ENCODE measurements at regions of chr6 and their contacts with region 1.

Region 1: DNA sequence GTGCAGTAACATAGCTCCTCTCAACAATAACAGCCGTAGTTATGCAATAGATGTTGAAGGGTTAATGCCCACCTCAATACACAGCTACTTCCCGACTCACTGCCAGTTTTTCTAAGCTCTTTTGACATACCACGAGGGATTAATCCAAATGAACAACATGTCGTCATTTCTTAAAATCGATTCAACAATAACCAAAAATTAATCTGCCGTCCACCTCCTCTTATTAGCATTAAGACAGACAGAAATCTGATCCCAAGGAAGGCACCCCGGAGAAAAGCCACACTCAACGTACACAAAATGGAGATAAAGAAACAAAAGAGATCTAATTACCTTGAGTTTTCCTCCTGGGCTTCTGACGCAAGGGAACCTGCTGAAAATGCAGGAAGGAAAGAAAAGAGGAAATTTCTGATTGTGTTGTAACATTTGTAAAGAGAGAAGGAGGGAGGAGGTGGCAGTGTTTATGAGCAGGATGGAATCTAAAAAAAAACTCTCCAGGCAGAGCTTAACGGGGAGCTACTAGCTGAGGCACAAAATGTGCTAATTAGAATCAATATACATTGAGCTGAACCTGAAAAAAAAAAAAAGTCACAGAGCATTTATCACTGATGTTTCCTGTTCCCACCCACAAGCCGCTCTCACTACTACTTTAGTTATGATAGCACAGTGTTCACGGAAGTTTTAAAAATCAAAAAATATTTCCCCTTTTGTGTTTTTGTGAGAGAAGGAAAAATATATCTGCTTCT is 109.3 kb downstream of the IPCEF1 start:
- DNase-seq: peak in 6 of 9 donors; percentile 45 to 67 (median 56)
- ATAC-seq: peak; percentile 64
- H3K4me3 ChIP-seq: peak overlapping the region; percentile 62
- H3K4me3 Mint-ChIP-seq: peak overlapping the region; percentile 84 to 100 (median 96)
- H3K27ac ChIP-seq: peak overlapping the region; percentile 81
- H3K27ac Mint-ChIP-seq: peak overlapping the region; percentile 90 to 97 (median 96)
- H3K4me1 ChIP-seq: peaks cover 52 to 59% of the 10 kb centered on the region in 2 donors
- H3K4me1 Mint-ChIP-seq: peaks cover 59 to 81% (median 77%) of the 10 kb centered on the region in 7 donors
- H3K27me3 ChIP-seq: no peaks in the 10 kb centered on the region
- H3K27me3 Mint-ChIP-seq: peaks cover 0 to 14% (median 0%) of the 10 kb centered on the region in 5 donors

Region 2: GRCh38 chr6:152301764-152302568 is 1945.3 kb before region 1 on chr6:
- CTCF ChIA-PET with region 1: no interaction called
- POLR2A ChIA-PET with region 1: no interaction called
- intact Hi-C with region 1: loop called in 1 of 2 experiments (anchors 10 kb)
- DNase-seq: peak; percentile 76 to 91 (median 87)
- ATAC-seq: peak; percentile 98
- H3K4me3 ChIP-seq: peak overlapping the region; percentile 84
- H3K4me3 Mint-ChIP-seq: peak overlapping the region; percentile 87 to 100 (median 100)
- H3K27ac ChIP-seq: peak overlapping the region; percentile 85
- H3K27ac Mint-ChIP-seq: peak overlapping the region; percentile 92 to 100 (median 99)
- H3K4me1 ChIP-seq: peaks cover 12 to 14% of the 10 kb centered on the region in 2 donors
- H3K4me1 Mint-ChIP-seq: peaks cover 22 to 49% (median 40%) of the 10 kb centered on the region in 7 donors
- H3K27me3 ChIP-seq: no peaks in the 10 kb centered on the region
- H3K27me3 Mint-ChIP-seq: no peaks in the 10 kb centered on the region

Region 3: DNA sequence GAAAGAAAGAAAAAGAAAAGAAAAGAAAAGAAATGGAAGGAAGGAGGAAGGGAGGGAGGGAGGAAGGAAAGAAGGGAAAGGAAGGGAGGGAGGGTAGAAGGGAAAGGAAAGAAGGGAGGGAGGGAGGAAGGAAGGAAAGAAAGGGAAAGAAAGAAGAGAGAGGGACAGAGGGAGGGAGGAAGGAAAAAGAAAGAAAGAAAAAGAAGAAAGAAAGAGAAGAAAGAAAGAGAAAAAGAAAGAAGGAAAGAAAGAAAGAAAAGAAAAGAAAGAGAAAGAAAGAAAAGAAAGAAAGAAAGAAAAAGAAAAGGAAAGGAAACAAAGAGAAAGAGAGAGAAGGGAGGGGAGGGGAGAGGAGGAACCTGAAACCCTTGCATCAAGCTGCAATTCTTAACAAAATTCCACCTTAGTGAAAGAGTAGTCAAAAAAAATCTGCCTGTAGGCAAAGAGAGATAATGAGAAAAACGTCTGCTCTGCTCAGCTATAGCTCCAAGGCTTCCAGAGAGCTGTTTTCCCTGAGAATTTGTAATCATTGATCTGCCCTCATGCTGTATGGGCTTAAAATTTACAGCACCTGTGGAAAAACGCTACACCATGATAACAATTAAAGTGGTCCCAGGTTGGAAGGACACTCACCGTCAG is 1566.3 kb before region 1 on chr6:
- CTCF ChIA-PET with region 1: no interaction called
- POLR2A ChIA-PET with region 1: no interaction called
- intact Hi-C with region 1: no loop called
- DNase-seq: no peak
- ATAC-seq: no peak
- H3K4me3 ChIP-seq: no peak overlapping the region
- H3K4me3 Mint-ChIP-seq: no peak overlapping the region
- H3K27ac ChIP-seq: no peak overlapping the region
- H3K27ac Mint-ChIP-seq: no peak overlapping the region
- H3K4me1 ChIP-seq: no peaks in the 10 kb centered on the region
- H3K4me1 Mint-ChIP-seq: no peaks in the 10 kb centered on the region
- H3K27me3 ChIP-seq: no peaks in the 10 kb centered on the region
- H3K27me3 Mint-ChIP-seq: peaks cover 0 to 16% (median 11%) of the 10 kb centered on the region in 5 donors

Region 4: DNA sequence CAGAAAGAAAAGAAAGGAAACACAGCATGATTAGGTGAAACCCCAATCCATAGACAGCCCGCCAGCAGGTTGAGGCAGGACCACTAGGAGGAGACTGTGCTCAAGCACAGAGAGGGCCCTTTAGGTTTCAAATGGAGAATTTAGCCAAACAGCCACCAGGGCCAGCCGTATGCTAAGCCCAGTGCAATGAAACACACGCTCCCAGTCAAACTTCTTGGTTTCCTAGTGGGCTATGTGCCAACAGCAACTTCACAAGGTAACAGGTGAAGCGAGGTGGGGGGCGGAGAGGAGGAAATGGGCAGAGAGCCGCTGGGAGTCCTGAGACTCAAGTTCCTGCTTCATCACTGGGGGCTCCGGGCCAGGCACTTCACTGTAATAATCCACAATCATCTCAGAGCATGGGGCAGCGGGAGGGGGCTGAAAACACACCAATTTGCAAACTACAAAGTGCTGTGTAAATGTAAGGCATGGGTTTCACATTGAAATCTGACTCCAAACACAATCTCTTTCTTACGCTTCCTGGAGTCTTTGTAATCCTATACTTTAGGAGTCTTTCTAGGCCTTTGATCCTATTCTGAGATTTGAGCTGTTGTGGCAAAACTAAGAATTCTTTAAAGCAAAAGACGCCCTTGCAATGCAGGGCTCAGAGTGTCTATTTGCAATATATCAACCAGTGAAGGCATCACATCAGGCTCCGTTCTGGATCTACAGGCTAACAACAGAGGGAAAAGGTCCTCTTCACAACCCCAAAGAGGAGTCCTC is 91.0 kb before region 1 on chr6:
- CTCF ChIA-PET with region 1: interaction called, 4 read pairs
- POLR2A ChIA-PET with region 1: interaction called, 6 read pairs
- intact Hi-C with region 1: loop called (anchors 1 kb)
- DNase-seq: peak; percentile 29 to 70 (median 58)
- ATAC-seq: peak; percentile 92
- H3K4me3 ChIP-seq: peak overlapping the region; percentile 57
- H3K4me3 Mint-ChIP-seq: peak overlapping the region; percentile 57 to 91 (median 81)
- H3K27ac ChIP-seq: peak overlapping the region; percentile 71
- H3K27ac Mint-ChIP-seq: peak overlapping the region; percentile 81 to 98 (median 92)
- H3K4me1 ChIP-seq: peaks cover 24 to 34% of the 10 kb centered on the region in 2 donors
- H3K4me1 Mint-ChIP-seq: peaks cover 29 to 84% (median 67%) of the 10 kb centered on the region in 7 donors
- H3K27me3 ChIP-seq: no peaks in the 10 kb centered on the region
- H3K27me3 Mint-ChIP-seq: peaks cover 0 to 2% (median 0%) of the 10 kb centered on the region in 5 donors

Region 5: GRCh38 chr6:154229786-154230185 is 17.5 kb before region 1 on chr6:
- CTCF ChIA-PET with region 1: no interaction called
- POLR2A ChIA-PET with region 1: interaction called, 37 read pairs
- intact Hi-C with region 1: loop called (anchors 1 kb)
- DNase-seq: peak in 2 of 9 donors; percentile 41 to 56
- ATAC-seq: peak; percentile 64
- H3K4me3 ChIP-seq: peak overlapping the region; percentile 30
- H3K4me3 Mint-ChIP-seq: peak overlapping the region; percentile 75 to 89 (median 78)
- H3K27ac ChIP-seq: peak overlapping the region; percentile 41
- H3K27ac Mint-ChIP-seq: peak overlapping the region; percentile 66 to 94 (median 86)
- H3K4me1 ChIP-seq: peaks cover 32 to 63% of the 10 kb centered on the region in 2 donors
- H3K4me1 Mint-ChIP-seq: peaks cover 55 to 91% (median 87%) of the 10 kb centered on the region in 7 donors
- H3K27me3 ChIP-seq: no peaks in the 10 kb centered on the region
- H3K27me3 Mint-ChIP-seq: no peaks in the 10 kb centered on the region

Region 6: GRCh38 chr6:154733012-154733625 is 485.8 kb after region 1 on chr6 and contains the start of gene SCAF8:
- CTCF ChIA-PET with region 1: no interaction called
- POLR2A ChIA-PET with region 1: interaction called, 5 read pairs
- intact Hi-C with region 1: loop called (anchors 5 kb)
- DNase-seq: peak; percentile 72 to 96 (median 90)
- ATAC-seq: peak; percentile 88
- H3K4me3 ChIP-seq: peak within 1 kb of the TSS; percentile 81
- H3K4me3 Mint-ChIP-seq: peak within 1 kb of the TSS; percentile 89 to 98 (median 92)
- H3K27ac ChIP-seq: peak within 1 kb of the TSS; percentile 93
- H3K27ac Mint-ChIP-seq: peak within 1 kb of the TSS; percentile 85 to 99 (median 93)
- H3K4me1 ChIP-seq: peaks cover 26 to 36% of the 10 kb centered on the region in 2 donors
- H3K4me1 Mint-ChIP-seq: peaks cover 20 to 49% (median 44%) of the 10 kb centered on the region in 7 donors
- H3K27me3 ChIP-seq: no peaks in the 10 kb centered on the region
- H3K27me3 Mint-ChIP-seq: no peaks in the 10 kb centered on the region
- total RNA-seq, gene SCAF8: 41.1 to 69.2 (median 54.9) TPM

Region 7: GRCh38 chr6:155418017-155418761 is 1170.9 kb after region 1 on chr6:
- CTCF ChIA-PET with region 1: no interaction called
- POLR2A ChIA-PET with region 1: no interaction called
- intact Hi-C with region 1: loop called in 1 of 2 experiments (anchors 10 kb)
- DNase-seq: peak; percentile 9 to 87 (median 68)
- ATAC-seq: peak; percentile 89
- H3K4me3 ChIP-seq: peak overlapping the region; percentile 44
- H3K4me3 Mint-ChIP-seq: peak overlapping the region; percentile 77 to 89 (median 84)
- H3K27ac ChIP-seq: peak overlapping the region; percentile 84
- H3K27ac Mint-ChIP-seq: peak overlapping the region; percentile 93 to 99 (median 97)
- H3K4me1 ChIP-seq: peaks cover 6 to 15% of the 10 kb centered on the region in 2 donors
- H3K4me1 Mint-ChIP-seq: peaks cover 22 to 50% (median 38%) of the 10 kb centered on the region in 7 donors
- H3K27me3 ChIP-seq: no peaks in the 10 kb centered on the region
- H3K27me3 Mint-ChIP-seq: no peaks in the 10 kb centered on the region

Measured in naive thymus-derived CD4-positive, alpha-beta T cell (primary cell).